H1 (cell line): ENCODE measurements at regions of chr1 and their contacts with region 1.

Region 1: GRCh38 chr1:98053471-98054366 is 132.9 kb upstream of the DPYD start:
- DNase-seq: peak; percentile 80 to 89
- H3K4me3 ChIP-seq: peak overlapping the region; percentile 60 to 73 (median 64)
- H3K27ac ChIP-seq: no peak overlapping the region
- H3K4me1 ChIP-seq: peaks cover 0 to 7% (median 2%) of the 10 kb centered on the region in 4 experiments; a peak in 4 of 7 replicates
- H3K27me3 ChIP-seq: peaks cover 12 to 29% (median 21%) of the 10 kb centered on the region in 4 experiments
- CTCF ChIP-seq: peak; percentile 73 to 84 (median 76)
- EP300 ChIP-seq: no peak
- POLR2A ChIP-seq: 0 out of 3 replicates have a peak, but pooled peaks of 1 of the 2 experiments have one; percentile 24
- RAD21 ChIP-seq: peak; percentile 71 to 87

Region 2: DNA sequence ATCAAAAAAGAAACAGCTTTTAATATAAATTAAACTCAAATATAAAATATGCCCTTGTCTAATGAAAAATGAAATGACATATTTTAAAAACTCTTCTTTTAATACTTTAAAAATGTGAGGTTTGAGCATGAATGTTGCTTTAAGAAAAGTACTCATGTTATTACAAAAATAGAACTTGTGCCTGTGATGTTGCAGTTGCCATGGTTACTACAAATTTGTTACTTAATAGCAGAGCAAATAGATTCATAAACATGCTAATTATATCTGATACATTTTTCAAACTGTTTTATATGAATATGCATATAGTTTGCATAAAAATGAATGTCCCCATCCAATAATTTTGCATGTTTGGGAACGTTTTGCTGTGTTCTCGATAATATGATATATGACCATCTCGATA is 19.4 kb after region 1 on chr1:
- CTCF ChIA-PET with region 1: interaction called, 11 read pairs
- POLR2A ChIA-PET with region 1: no interaction called
- DNase-seq: no peak
- H3K4me3 ChIP-seq: no peak overlapping the region
- H3K27ac ChIP-seq: no peak overlapping the region
- H3K4me1 ChIP-seq: peaks cover 0 to 3% (median 1%) of the 10 kb centered on the region in 4 experiments; a peak in 2 of 7 replicates
- H3K27me3 ChIP-seq: no peaks in the 10 kb centered on the region
- CTCF ChIP-seq: no peak
- EP300 ChIP-seq: no peak
- POLR2A ChIP-seq: no peak
- RAD21 ChIP-seq: no peak

Region 3: GRCh38 chr1:98098473-98098872 is 44.8 kb after region 1 on chr1:
- CTCF ChIA-PET with region 1: interaction called, 11 read pairs
- POLR2A ChIA-PET with region 1: no interaction called
- DNase-seq: no peak
- H3K4me3 ChIP-seq: no peak overlapping the region
- H3K27ac ChIP-seq: no peak overlapping the region
- H3K4me1 ChIP-seq: no peaks in the 10 kb centered on the region
- H3K27me3 ChIP-seq: no peaks in the 10 kb centered on the region
- CTCF ChIP-seq: no peak
- EP300 ChIP-seq: no peak
- POLR2A ChIP-seq: no peak
- RAD21 ChIP-seq: no peak

Region 4: DNA sequence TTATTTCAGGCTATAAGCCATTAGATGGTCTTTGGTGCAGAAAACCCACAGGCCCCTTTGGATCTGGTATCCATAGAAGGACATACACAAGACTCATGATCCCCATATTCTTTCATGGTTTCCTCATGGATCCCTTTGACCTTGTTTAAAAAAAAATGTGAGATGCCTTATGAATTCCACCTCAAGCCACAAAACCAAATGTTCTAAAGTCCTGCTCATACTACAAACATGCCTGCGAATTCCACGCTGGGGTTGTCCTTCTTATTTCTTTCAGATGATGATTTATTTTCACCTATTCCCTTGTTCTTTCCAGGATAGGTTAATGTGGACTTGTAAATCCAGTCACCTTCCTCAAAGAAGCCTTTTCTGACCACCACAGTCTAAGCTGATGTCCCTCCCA is 124.0 kb after region 1 on chr1:
- CTCF ChIA-PET with region 1: no interaction called
- POLR2A ChIA-PET with region 1: no interaction called
- DNase-seq: no peak
- H3K4me3 ChIP-seq: no peak overlapping the region
- H3K27ac ChIP-seq: no peak overlapping the region
- H3K4me1 ChIP-seq: no peaks in the 10 kb centered on the region
- H3K27me3 ChIP-seq: no peaks in the 10 kb centered on the region
- CTCF ChIP-seq: no peak
- EP300 ChIP-seq: no peak
- POLR2A ChIP-seq: no peak
- RAD21 ChIP-seq: no peak

Region 5: GRCh38 chr1:98468111-98468717 is 414.5 kb after region 1 on chr1:
- CTCF ChIA-PET with region 1: interaction called, 12 read pairs
- POLR2A ChIA-PET with region 1: no interaction called
- DNase-seq: no peak
- H3K4me3 ChIP-seq: no peak overlapping the region
- H3K27ac ChIP-seq: no peak overlapping the region
- H3K4me1 ChIP-seq: peaks cover 0 to 2% (median 0%) of the 10 kb centered on the region in 4 experiments; a peak in 1 of 7 replicates
- H3K27me3 ChIP-seq: no peaks in the 10 kb centered on the region
- CTCF ChIP-seq: peak in 2 of 3 experiments; percentile 24 to 44; a peak in 2 of 4 replicates
- EP300 ChIP-seq: no peak
- POLR2A ChIP-seq: no peak
- RAD21 ChIP-seq: peak; percentile 77 to 89